CD14-positive monocyte (primary cell): ENCODE measurements at regions of chr9 and their contacts with region 1.

Region 1: DNA sequence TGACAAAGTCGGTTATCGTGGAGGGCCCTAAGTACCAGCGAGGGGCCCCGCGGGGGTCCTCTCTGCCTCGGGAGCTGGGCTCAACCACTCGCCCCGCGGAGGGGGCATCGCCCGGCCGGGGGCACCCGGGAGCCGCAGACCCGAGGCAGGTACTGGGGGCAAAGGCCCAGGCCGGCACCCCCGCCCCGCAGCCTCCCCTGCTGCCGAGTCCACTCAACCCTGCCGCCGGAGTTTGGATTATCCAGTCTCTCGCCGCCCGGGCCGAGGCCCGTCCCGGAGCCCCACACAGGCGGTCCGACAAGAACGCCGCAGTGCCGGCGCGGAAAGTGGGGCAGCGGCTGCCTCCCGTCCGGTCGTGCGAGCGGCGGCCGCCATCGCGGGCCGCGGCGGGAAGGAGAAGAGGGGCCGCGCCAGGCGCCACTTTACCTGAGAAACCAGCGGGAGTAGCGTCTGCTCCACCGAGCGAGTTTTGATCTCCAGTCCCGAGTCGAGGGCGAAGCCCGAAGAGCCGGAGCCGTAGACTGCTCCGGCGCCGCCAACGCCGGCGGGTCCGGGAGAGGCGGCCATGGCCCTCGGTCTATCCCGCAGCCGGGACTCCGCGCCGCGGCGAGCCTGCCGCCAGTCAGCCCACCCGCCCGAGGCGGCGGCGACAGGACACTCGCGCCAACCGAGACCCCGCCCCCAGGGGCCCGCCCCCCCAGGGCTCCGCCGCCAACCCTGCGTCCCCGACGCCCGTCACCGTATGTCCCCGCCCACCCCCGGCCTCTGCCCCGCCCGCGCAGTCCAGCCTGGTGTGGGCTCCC is at the start of gene CTNNAL1:
- DNase-seq: peak; percentile 65 to 75 (median 70)
- H3K4me3 ChIP-seq: peak within 1 kb of the TSS; percentile 56 to 87 (median 84)
- H3K4me3 Mint-ChIP-seq: peak within 1 kb of the TSS; percentile 99
- H3K27ac ChIP-seq: peak within 1 kb of the TSS in 1 of 2 donors; percentile 55
- H3K27ac Mint-ChIP-seq: peak within 1 kb of the TSS; percentile 73 to 89 (median 82)
- H3K4me1 ChIP-seq: peaks cover 25 to 33% of the 10 kb centered on the region in 2 donors
- H3K4me1 Mint-ChIP-seq: peaks cover 35% of the 10 kb centered on the region
- H3K27me3 ChIP-seq: no peaks in the 10 kb centered on the region
- H3K27me3 Mint-ChIP-seq: peaks cover 6 to 9% (median 8%) of the 10 kb centered on the region in 3 donors
- CTCF ChIP-seq: no peak
- polyA plus RNA-seq, gene CTNNAL1: 0.10 to 0.39 (median 0.25) TPM

Region 2: GRCh38 chr9:108933718-108934322 is 79.3 kb before region 1 on chr9 and contains the start of gene ELP1:
- intact Hi-C with region 1: loop called in 1 of 2 experiments (anchors 5 kb)
- DNase-seq: peak; percentile 92 to 93 (median 93)
- H3K4me3 ChIP-seq: peak within 1 kb of the TSS; percentile 69 to 96 (median 88)
- H3K4me3 Mint-ChIP-seq: peak within 1 kb of the TSS; percentile 97 to 98
- H3K27ac ChIP-seq: peak within 1 kb of the TSS; percentile 86 to 93
- H3K27ac Mint-ChIP-seq: peak within 1 kb of the TSS; percentile 91 to 97 (median 96)
- H3K4me1 ChIP-seq: peaks cover 19 to 25% of the 10 kb centered on the region in 2 donors
- H3K4me1 Mint-ChIP-seq: peaks cover 19% of the 10 kb centered on the region
- H3K27me3 ChIP-seq: no peaks in the 10 kb centered on the region
- H3K27me3 Mint-ChIP-seq: peaks cover 0 to 1% (median 0%) of the 10 kb centered on the region in 3 donors
- CTCF ChIP-seq: peak; percentile 32
- polyA plus RNA-seq, gene ELP1: 7.9 to 12.2 (median 11.1) TPM

Region 3: DNA sequence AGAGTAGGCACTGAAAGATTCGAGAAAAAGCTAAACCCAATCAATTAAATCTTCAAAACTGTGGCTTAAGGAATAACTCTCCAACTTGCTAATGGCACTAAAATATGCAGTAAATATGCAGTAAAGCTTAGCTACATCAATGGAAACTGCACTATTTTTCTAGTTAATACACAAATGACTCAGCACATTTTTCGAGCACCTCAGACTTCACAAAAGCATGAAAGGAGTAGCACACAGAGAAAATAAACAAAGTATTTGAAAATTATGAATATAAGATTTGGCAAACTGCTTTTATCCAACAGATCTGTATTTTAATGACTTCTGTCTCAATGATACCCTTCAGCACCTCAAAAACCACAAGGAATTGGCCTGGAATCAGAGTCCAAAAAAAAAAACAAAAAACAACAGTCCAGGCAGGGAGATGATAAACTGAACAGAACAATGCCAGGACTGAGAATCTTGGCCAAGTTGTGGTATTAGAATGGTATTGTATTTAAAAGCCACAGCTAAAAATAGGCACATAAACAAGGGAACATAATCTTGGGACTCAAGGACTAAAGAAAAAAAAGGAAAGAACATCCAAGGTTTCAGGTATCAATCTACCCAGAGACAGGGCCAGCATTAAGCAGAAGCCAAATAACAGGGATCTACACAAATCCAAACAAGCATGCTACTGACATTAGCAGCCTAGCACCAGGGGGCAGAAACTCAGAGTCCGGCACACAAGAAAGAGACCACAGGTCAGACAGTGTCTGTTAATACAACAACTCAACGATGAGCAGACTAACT is 85.3 kb after region 1 on chr9:
- intact Hi-C with region 1: no loop called
- DNase-seq: no peak
- H3K4me3 ChIP-seq: no peak overlapping the region
- H3K4me3 Mint-ChIP-seq: no peak overlapping the region
- H3K27ac ChIP-seq: peak overlapping the region in 1 of 2 donors; percentile 13
- H3K27ac Mint-ChIP-seq: peak overlapping the region in 3 of 7 donors; percentile 1 to 39 (median 15)
- H3K4me1 ChIP-seq: peaks cover 0 to 3% of the 10 kb centered on the region in 2 donors
- H3K4me1 Mint-ChIP-seq: peaks cover 21% of the 10 kb centered on the region
- H3K27me3 ChIP-seq: no peaks in the 10 kb centered on the region
- H3K27me3 Mint-ChIP-seq: no peaks in the 10 kb centered on the region
- CTCF ChIP-seq: no peak